ENCODE measurements at regions of chr2 and their contacts with region 1.

Region 1: GRCh38 chr2:235510318-235510717 is 16.5 kb downstream of the AGAP1 start:
- DNase-seq: peak; percentile 59
- H3K4me3 ChIP-seq: no peak overlapping the region
- H3K27ac ChIP-seq: peak overlapping the region; percentile 82 to 92 (median 88)
- H3K4me1 ChIP-seq: peaks cover 44 to 84% (median 62%) of the 10 kb centered on the region in 4 donors
- H3K27me3 ChIP-seq: no peaks in the 10 kb centered on the region
- CTCF ChIP-seq: no peak
- EP300 ChIP-seq: no peak
- POLR2A ChIP-seq: peak; percentile 16

Region 2: DNA sequence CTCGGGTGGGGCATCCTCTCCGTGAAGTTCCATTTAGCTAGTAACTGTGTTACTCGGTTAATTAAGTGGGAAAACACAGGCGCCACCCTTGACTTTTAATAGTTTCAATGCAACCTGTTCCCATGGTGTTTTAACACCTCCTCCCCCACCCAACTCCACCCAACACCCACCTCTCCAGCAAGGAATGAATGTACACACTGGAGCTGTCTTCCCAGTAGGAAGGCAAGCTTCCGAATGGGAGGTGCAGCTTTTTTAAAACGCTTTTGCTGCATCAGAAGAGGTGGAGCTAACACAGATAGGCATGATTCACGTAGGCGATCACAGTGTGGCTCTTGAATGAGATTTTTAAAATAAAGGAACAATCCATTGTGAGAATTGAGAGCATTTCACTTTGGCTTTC is 90.3 kb before region 1 on chr2:
- in situ Hi-C with region 1: no loop called
- intact Hi-C with region 1: loop called (anchors 1 kb)
- DNase-seq: no peak
- H3K4me3 ChIP-seq: no peak overlapping the region
- H3K27ac ChIP-seq: no peak overlapping the region
- H3K4me1 ChIP-seq: no peaks in the 10 kb centered on the region
- H3K27me3 ChIP-seq: no peaks in the 10 kb centered on the region
- CTCF ChIP-seq: no peak
- EP300 ChIP-seq: no peak
- POLR2A ChIP-seq: no peak

Region 3: DNA sequence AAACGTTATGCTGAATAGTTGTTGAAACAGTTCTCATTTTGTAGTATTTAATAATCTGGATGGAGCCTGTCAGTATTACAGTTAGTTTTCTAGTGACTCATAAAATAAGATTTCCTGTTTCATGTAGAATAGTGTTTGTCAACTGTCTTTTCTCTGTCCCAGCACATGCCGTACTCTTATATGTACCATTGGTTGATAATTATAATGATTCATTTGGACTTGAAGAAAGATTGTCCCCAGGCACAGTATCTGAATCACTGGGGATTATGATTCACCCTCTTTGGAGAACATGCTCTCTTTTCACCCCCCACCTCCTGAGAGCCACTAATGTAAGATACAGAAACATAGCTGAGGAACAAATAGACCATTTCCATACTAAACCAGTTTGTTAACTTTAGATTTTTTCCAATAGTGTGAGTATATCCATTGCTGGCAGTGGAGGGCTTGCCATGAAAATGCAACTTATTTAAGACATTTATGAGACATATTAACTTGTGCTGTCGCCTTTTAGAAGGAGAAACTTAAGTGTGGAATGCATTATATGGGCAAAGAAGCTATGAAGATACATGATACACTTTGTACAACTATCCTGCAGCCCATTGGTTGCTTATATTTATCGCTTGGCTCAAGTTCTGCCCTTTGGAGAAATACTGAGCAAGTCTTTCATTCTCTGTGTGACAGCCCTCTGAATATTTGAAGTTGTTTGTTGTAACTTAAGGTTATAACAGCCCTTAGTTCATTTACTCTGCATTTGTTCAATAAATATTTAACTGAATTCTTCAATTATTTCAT is 1587.8 kb after region 1 on chr2:
- in situ Hi-C with region 1: no loop called
- intact Hi-C with region 1: no loop called
- DNase-seq: no peak
- H3K4me3 ChIP-seq: no peak overlapping the region
- H3K27ac ChIP-seq: no peak overlapping the region
- H3K4me1 ChIP-seq: peaks cover 0 to 4% (median under 1%) of the 10 kb centered on the region in 4 donors
- H3K27me3 ChIP-seq: no peaks in the 10 kb centered on the region
- CTCF ChIP-seq: no peak
- EP300 ChIP-seq: no peak
- POLR2A ChIP-seq: no peak